Activated T-helper 2 cell treated with anti-CD3 and anti-CD28 coated beads, Interferon-gamma antibody, Interleukin-2, Interleukin-4, amounts not matched to agents 10 μg/mL and 5 μg/mL and 100 μg/mL, durations not matched to agents 14 hours and 24 hours and 36 hours (primary cell): ENCODE measurements at regions of chr19 and their contacts with region 1.

Region 1: GRCh38 chr19:11203194-11204075 is 6.1 kb upstream of the KANK2 start:
- DNase-seq: no peak
- H3K4me3 Mint-ChIP-seq: no peak overlapping the region
- H3K27ac Mint-ChIP-seq: no peak overlapping the region
- H3K4me1 Mint-ChIP-seq: peaks cover 2% of the 10 kb centered on the region
- H3K27me3 Mint-ChIP-seq: peaks cover 2% of the 10 kb centered on the region

Region 2: DNA sequence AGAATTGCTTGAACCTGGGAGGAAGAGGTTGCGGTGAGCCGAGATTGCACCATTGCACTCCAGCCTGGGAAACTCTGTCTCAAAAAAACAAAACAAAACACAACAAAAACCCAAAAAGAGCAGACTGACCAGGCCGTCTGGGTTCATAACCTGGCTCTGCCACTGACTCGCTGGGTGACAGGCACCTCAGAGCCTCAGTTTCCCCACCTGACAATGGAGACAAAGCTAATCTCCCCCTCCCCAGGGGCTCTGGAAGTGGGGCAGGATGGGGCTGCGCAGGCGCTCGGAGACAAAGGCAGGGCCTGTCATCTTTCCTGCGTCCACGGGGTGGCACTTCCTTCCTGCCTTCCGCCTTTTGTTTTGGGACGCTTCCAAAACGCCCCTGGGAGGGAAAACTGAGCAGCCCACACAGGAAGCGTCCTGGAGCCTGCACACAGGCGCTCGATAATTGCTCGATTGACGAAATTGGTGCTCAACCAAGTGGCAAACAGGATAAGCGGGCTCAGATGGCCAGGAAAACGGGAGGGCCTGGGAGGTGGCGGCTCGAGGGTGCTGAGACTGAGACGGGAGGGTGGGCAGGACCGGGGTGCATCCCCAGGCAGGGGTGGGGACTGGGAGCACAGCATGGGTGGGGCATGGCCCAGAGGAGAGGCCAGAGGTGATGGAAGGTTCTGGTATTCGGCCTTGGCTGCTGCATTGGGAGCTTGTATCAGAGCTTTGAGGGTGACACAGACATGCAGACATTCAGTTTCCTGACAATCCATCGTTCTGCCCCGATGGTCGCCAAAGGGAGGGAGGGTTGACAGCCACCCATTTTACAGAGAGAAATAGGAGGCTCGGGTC is 65.7 kb before region 1 on chr19:
- intact Hi-C with region 1: loop called (anchors 5 kb)
- DNase-seq: peak; percentile 29
- H3K4me3 Mint-ChIP-seq: peak overlapping the region; percentile 76
- H3K27ac Mint-ChIP-seq: peak overlapping the region; percentile 69
- H3K4me1 Mint-ChIP-seq: peaks cover 9% of the 10 kb centered on the region
- H3K27me3 Mint-ChIP-seq: no peaks in the 10 kb centered on the region